K562 (cell line): ENCODE measurements at regions of chr6 and their contacts with region 1.

Region 1: DNA sequence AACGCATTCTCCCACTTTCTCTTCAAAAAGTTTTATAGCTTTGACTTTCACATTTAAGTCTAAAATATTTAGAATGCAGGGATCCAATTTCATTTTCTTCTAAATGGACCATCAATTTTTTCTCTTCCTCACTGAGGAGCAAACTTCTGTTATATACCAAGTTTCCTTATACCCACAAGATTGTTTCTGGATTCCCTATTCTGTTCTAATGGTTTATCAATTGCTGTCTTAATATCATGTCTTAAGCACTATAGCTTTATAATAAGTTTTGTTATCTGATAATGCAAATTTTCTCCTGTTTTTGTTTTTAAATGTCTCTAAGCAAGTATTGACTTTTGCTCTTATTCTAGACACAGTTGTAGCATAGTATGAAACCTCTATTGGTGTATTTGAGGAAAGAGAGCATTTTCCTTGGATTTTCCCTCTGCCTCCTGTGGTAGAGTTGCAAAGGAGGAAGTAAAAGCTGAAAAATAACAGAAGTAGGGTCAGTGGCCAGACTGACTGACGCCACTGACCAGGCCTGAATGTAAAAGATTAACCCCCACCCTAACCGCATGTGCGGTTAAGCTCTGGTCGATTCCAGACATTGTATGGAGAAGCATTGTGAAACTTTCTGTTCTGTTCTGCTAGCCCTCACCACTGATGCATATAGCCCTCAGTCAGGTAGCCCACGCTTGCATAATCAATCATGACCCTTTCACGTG is 40.3 kb downstream of the GPX5 start:
- DNase-seq: peak; percentile 53 to 89 (median 70)
- ATAC-seq: peak; percentile 95
- H3K4me3 ChIP-seq: no peak overlapping the region
- H3K27ac ChIP-seq: peak overlapping the region; percentile 76
- H3K4me1 ChIP-seq: peaks cover 4 to 50% of the 10 kb centered on the region in 2 experiments; a peak in 3 of 5 replicates
- H3K27me3 ChIP-seq: no peaks in the 10 kb centered on the region
- CTCF ChIP-seq: peak in 1 of 3 experiments; percentile 8; a peak in 1 of 6 replicates
- EP300 ChIP-seq: peak; percentile 99
- POLR2A ChIP-seq: no peak
- RAD21 ChIP-seq: no peak; a peak in 1 of 4 replicates

Region 2: GRCh38 chr6:28393911-28394662 is 171.9 kb before region 1 on chr6:
- CTCF ChIA-PET with region 1: no interaction called
- POLR2A ChIA-PET with region 1: no interaction called
- in situ Hi-C with region 1: no loop called
- intact Hi-C with region 1: no loop called
- DNase-seq: peak in 3 of 4 experiments; percentile 36 to 48 (median 39)
- ATAC-seq: no peak
- H3K4me3 ChIP-seq: no peak overlapping the region
- H3K27ac ChIP-seq: no peak overlapping the region
- H3K4me1 ChIP-seq: peaks cover 10 to 24% of the 10 kb centered on the region in 2 experiments; a peak in 4 of 5 replicates
- H3K27me3 ChIP-seq: no peaks in the 10 kb centered on the region
- CTCF ChIP-seq: peak; percentile 30 to 53 (median 34); a peak in 4 of 6 replicates
- EP300 ChIP-seq: no peak
- POLR2A ChIP-seq: no peak
- RAD21 ChIP-seq: no peak; a peak in 1 of 4 replicates

Region 3: GRCh38 chr6:28553986-28554881 is 11.7 kb before region 1 on chr6:
- CTCF ChIA-PET with region 1: no interaction called
- POLR2A ChIA-PET with region 1: interaction called, 15 read pairs
- in situ Hi-C with region 1: no loop called
- intact Hi-C with region 1: no loop called
- DNase-seq: peak; percentile 37 to 92 (median 62)
- ATAC-seq: peak; percentile 88
- H3K4me3 ChIP-seq: peak overlapping the region; percentile 11; the same call in 1 of the 2 replicates
- H3K27ac ChIP-seq: peak overlapping the region; percentile 80
- H3K4me1 ChIP-seq: peaks cover 20 to 32% of the 10 kb centered on the region in 2 experiments
- H3K27me3 ChIP-seq: no peaks in the 10 kb centered on the region
- CTCF ChIP-seq: no peak
- EP300 ChIP-seq: peak; percentile 77
- POLR2A ChIP-seq: no peak
- RAD21 ChIP-seq: no peak

Region 4: GRCh38 chr6:28580475-28580874 is 14.5 kb after region 1 on chr6:
- CTCF ChIA-PET with region 1: no interaction called
- POLR2A ChIA-PET with region 1: interaction called, 10 read pairs
- in situ Hi-C with region 1: no loop called
- intact Hi-C with region 1: no loop called
- DNase-seq: no peak
- ATAC-seq: peak; percentile 58
- H3K4me3 ChIP-seq: no peak overlapping the region
- H3K27ac ChIP-seq: no peak overlapping the region
- H3K4me1 ChIP-seq: peaks cover 0 to 5% of the 10 kb centered on the region in 2 experiments
- H3K27me3 ChIP-seq: no peaks in the 10 kb centered on the region
- CTCF ChIP-seq: peak in 2 of 3 experiments; percentile 28 to 69; a peak in 3 of 6 replicates
- EP300 ChIP-seq: no peak
- POLR2A ChIP-seq: no peak
- RAD21 ChIP-seq: peak; percentile 67 to 84